CD8-positive, alpha-beta T cell (primary cell): ENCODE measurements at regions of chr11 and their contacts with region 1.

Region 1: DNA sequence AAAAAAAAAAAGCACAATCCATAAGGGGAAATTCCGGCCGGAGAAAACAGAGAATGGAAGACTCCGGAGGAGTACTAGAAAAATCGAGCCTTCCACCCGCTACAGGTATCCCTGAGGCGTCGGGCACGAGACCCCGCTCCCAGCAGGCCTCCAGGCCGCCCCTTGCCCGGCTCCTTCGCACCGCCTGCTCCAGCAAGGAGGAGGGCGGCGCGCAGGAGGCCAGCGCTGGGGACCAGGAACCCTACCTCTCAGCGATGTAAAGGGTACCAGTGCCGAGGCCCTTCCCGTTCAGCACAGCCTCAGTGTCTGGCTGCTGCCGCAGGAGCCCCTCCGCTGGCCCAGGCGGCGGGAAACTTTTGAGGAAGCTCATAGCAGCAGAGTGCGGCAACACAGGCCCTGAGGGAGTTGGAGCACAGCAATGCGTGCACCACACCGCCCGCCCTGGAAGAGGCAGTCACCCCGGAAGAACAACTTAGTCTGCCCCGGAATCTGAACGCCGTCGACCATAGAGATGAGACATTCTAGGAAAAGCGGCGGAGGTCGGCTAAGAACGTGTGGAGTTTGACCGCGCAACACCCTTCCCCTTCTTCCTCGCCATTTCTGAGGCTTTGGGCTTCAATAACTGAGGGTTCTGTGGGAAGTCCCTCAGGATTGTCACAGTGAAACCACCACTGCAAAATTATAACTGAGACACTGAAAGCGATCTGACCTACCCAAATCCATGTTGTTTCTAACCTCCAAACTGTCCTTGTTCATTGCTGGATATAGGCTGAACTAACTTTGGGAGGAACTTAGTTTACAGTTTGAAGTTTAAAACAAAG is at the start of gene CLNS1A:
- DNase-seq: peak; percentile 51 to 88 (median 81)
- ATAC-seq: peak; percentile 99
- H3K4me3 ChIP-seq: peak within 1 kb of the TSS; percentile 88 to 91
- H3K4me3 Mint-ChIP-seq: peak within 1 kb of the TSS; percentile 95
- H3K27ac ChIP-seq: peak within 1 kb of the TSS; percentile 62 to 80
- H3K27ac Mint-ChIP-seq: peak within 1 kb of the TSS; percentile 97
- H3K4me1 ChIP-seq: peaks cover 26% of the 10 kb centered on the region
- H3K4me1 Mint-ChIP-seq: peaks cover 43% of the 10 kb centered on the region
- H3K27me3 ChIP-seq: no peaks in the 10 kb centered on the region
- H3K27me3 Mint-ChIP-seq: no peaks in the 10 kb centered on the region
- CTCF ChIP-seq: no peak
- total RNA-seq, gene CLNS1A: 84.6 to 87.5 TPM

Region 2: GRCh38 chr11:76444384-76445123 is 1193.0 kb before region 1 on chr11 and contains the start of gene EMSY:
- CTCF ChIA-PET with region 1: no interaction called
- POLR2A ChIA-PET with region 1: no interaction called
- intact Hi-C with region 1: loop called in 1 of 2 experiments (anchors 10 kb)
- DNase-seq: peak; percentile 77 to 97 (median 90)
- ATAC-seq: peak; percentile 91
- H3K4me3 ChIP-seq: peak within 1 kb of the TSS; percentile 58 to 100
- H3K4me3 Mint-ChIP-seq: peak within 1 kb of the TSS; percentile 94
- H3K27ac ChIP-seq: peak within 1 kb of the TSS; percentile 70 to 97
- H3K27ac Mint-ChIP-seq: peak within 1 kb of the TSS; percentile 96
- H3K4me1 ChIP-seq: peaks cover 20% of the 10 kb centered on the region
- H3K4me1 Mint-ChIP-seq: peaks cover 38% of the 10 kb centered on the region
- H3K27me3 ChIP-seq: no peaks in the 10 kb centered on the region
- H3K27me3 Mint-ChIP-seq: no peaks in the 10 kb centered on the region
- CTCF ChIP-seq: no peak
- total RNA-seq, gene EMSY: 19.8 to 20.7 TPM

Region 3: GRCh38 chr11:77438487-77438886 is 199.1 kb before region 1 on chr11:
- CTCF ChIA-PET with region 1: no interaction called
- POLR2A ChIA-PET with region 1: no interaction called
- intact Hi-C with region 1: no loop called
- DNase-seq: no peak
- ATAC-seq: no peak
- H3K4me3 ChIP-seq: no peak overlapping the region
- H3K4me3 Mint-ChIP-seq: no peak overlapping the region
- H3K27ac ChIP-seq: no peak overlapping the region
- H3K27ac Mint-ChIP-seq: no peak overlapping the region
- H3K4me1 ChIP-seq: no peaks in the 10 kb centered on the region
- H3K4me1 Mint-ChIP-seq: no peaks in the 10 kb centered on the region
- H3K27me3 ChIP-seq: no peaks in the 10 kb centered on the region
- H3K27me3 Mint-ChIP-seq: no peaks in the 10 kb centered on the region
- CTCF ChIP-seq: no peak

Region 4: DNA sequence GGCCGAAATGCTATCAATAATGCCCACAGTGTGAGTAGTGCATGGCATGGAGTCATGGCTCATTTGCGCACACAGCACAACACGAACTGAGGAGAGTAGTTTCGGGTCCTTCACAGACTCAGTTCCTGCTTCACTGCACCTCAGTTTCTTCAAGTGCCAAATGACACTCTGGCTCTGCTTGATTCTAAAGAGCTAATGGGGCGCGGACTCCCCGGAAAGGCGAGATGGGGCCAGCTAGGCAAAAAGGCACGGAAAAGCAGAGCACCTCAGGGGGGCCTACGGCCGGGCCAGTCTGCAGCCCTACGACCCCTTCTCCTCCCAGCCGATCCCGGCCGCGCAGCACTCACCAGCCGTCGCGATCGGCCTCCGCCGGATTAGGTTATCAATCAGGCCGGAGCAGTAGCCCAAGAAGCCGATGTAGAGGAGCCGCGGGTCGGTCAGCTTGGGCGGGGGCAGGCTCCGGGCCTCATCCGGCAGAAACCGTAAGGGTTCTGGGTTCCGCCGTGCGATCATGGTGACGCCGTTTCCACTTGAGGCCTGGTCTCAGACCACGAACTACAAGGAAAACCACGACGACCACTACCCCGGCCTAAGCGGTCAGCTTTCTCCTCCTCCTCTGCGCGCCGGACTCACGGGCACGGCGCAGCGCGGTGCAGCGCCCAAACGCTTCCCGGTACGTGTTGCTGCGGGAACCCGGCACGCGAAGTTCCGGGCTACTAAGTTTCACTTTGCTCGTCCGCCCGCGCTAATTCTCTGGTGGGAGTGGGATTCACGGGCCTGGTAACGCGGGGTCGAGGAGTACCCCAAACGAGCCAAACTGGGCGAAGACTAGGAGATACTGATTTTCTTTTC is 441.9 kb after region 1 on chr11 and contains the start of gene NDUFC2:
- CTCF ChIA-PET with region 1: interaction called, 3 read pairs
- POLR2A ChIA-PET with region 1: no interaction called
- intact Hi-C with region 1: loop called in 1 of 2 experiments (anchors 2 kb)
- DNase-seq: peak; percentile 30 to 83 (median 66)
- ATAC-seq: peak; percentile 82
- H3K4me3 ChIP-seq: peak within 1 kb of the TSS; percentile 74 to 97
- H3K4me3 Mint-ChIP-seq: peak within 1 kb of the TSS; percentile 96
- H3K27ac ChIP-seq: peak within 1 kb of the TSS; percentile 76 to 78
- H3K27ac Mint-ChIP-seq: peak within 1 kb of the TSS; percentile 96
- H3K4me1 ChIP-seq: peaks cover 56% of the 10 kb centered on the region
- H3K4me1 Mint-ChIP-seq: peaks cover 63% of the 10 kb centered on the region
- H3K27me3 ChIP-seq: no peaks in the 10 kb centered on the region
- H3K27me3 Mint-ChIP-seq: no peaks in the 10 kb centered on the region
- CTCF ChIP-seq: no peak
- total RNA-seq, gene NDUFC2: 72.2 to 76.3 TPM